T-cell (primary cell): ENCODE measurements at regions of chr3 and their contacts with region 1.

Region 1: DNA sequence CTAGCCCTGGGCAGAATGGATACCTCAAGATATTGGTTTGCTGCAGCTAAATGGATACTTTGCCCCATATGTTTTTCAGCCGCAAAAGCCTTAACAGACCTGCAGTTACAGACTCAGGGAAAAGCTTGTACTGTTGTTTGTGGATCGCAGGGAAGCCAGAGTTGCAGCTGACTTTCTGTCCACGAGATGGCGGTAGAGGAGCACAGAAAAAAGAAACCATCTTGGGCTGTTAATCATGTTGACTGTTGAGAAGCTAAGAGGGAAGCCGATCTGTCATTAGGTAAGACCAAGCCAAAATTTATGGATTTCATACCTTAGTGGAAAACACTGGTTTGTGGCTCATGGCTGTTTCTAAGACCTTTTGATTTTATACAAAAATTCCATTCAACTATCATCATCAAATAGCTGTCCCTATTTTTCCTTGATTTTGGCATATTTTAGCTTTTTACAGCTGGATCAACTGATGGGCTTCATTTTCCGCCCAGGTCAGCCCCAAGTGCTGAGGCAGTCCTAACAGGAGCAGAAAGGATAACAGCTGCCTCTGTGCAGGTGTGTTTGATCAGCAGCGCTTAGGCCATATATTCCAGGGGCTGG is 205.7 kb upstream of the ZPLD1 start:
- DNase-seq: peak; percentile 35 to 88 (median 67)
- ATAC-seq: peak; percentile 71 to 86 (median 80)
- H3K4me3 ChIP-seq: no peak overlapping the region
- H3K4me3 Mint-ChIP-seq: no peak overlapping the region
- H3K27ac ChIP-seq: no peak overlapping the region
- H3K27ac Mint-ChIP-seq: no peak overlapping the region
- H3K4me1 ChIP-seq: peaks cover 0 to 8% of the 10 kb centered on the region in 2 experiments
- H3K4me1 Mint-ChIP-seq: peaks cover 20 to 23% (median 21%) of the 10 kb centered on the region in 3 donors
- H3K27me3 ChIP-seq: no peaks in the 10 kb centered on the region
- H3K27me3 Mint-ChIP-seq: no peaks in the 10 kb centered on the region

Region 2: GRCh38 chr3:101091489-101091888 is 1137.7 kb before region 1 on chr3:
- CTCF ChIA-PET with region 1: no interaction called
- POLR2A ChIA-PET with region 1: no interaction called
- DNase-seq: no peak
- ATAC-seq: no peak
- H3K4me3 ChIP-seq: no peak overlapping the region
- H3K4me3 Mint-ChIP-seq: no peak overlapping the region
- H3K27ac ChIP-seq: no peak overlapping the region
- H3K27ac Mint-ChIP-seq: no peak overlapping the region
- H3K4me1 ChIP-seq: no peaks in the 10 kb centered on the region
- H3K4me1 Mint-ChIP-seq: no peaks in the 10 kb centered on the region
- H3K27me3 ChIP-seq: no peaks in the 10 kb centered on the region
- H3K27me3 Mint-ChIP-seq: peaks cover 2 to 17% of the 10 kb centered on the region in 2 donors

Region 3: GRCh38 chr3:101803173-101803782 is 425.9 kb before region 1 on chr3:
- CTCF ChIA-PET with region 1: interaction called, 26 to 112 read pairs
- POLR2A ChIA-PET with region 1: interaction called in 1 of 2 experiments, 3 read pairs
- DNase-seq: peak in 30 of 35 experiments; percentile 2 to 88 (median 44)
- ATAC-seq: peak; percentile 96 to 99 (median 98)
- H3K4me3 ChIP-seq: no peak overlapping the region
- H3K4me3 Mint-ChIP-seq: no peak overlapping the region
- H3K27ac ChIP-seq: peak overlapping the region; percentile 25
- H3K27ac Mint-ChIP-seq: peak overlapping the region; percentile 73 to 81
- H3K4me1 ChIP-seq: peaks cover 0 to 3% of the 10 kb centered on the region in 2 experiments
- H3K4me1 Mint-ChIP-seq: peaks cover 34 to 50% (median 39%) of the 10 kb centered on the region in 3 donors
- H3K27me3 ChIP-seq: no peaks in the 10 kb centered on the region
- H3K27me3 Mint-ChIP-seq: no peaks in the 10 kb centered on the region

Region 4: DNA sequence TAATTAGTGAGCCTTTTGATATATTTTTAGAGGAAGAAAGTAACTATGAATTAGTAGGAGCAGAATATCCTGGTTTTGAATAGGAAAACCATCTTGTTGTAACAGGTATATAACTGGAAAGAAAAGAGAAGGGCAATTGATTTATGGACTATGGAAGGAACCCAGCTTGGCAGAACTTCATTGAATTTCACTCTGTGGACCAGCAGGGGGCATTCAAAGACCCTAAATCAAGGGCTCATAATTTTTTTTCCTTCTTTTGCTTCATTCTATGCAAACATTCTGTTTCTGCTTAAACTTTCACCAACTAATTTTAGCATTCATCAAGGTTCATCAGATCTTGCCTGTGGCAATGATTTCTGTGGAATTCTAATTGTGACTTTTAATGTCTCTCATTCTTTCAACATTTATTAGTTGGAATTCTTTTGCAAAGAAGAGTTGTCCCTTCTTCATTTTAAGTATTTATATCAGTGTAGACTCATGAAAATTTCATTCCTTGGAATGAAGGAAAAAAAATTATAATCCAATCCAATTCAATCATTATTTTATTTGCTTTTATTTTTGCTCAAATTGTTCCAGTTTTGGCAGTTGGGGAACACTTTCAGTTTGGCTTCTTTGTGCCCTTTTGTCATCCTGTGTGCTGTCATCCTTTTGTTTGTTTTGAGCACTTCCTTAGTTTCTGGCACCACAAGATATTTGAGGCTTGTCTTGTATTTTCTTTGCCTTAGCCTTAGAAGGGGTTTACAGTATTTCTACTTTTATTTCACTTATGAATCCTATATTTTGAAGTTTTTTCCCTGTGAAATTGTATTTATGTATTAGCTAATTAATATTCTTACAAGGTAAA is 419.8 kb before region 1 on chr3:
- CTCF ChIA-PET with region 1: interaction called, 25 to 112 read pairs
- POLR2A ChIA-PET with region 1: interaction called, 3 read pairs
- DNase-seq: peak in 26 of 35 experiments; percentile 15 to 76 (median 32)
- ATAC-seq: peak; percentile 74 to 80 (median 76)
- H3K4me3 ChIP-seq: no peak overlapping the region
- H3K4me3 Mint-ChIP-seq: peak overlapping the region in 2 of 3 donors; percentile 7 to 22
- H3K27ac ChIP-seq: peak overlapping the region; percentile 50
- H3K27ac Mint-ChIP-seq: peak overlapping the region; percentile 74 to 84
- H3K4me1 ChIP-seq: peaks cover 4 to 19% of the 10 kb centered on the region in 2 experiments
- H3K4me1 Mint-ChIP-seq: peaks cover 42 to 48% (median 44%) of the 10 kb centered on the region in 3 donors
- H3K27me3 ChIP-seq: no peaks in the 10 kb centered on the region
- H3K27me3 Mint-ChIP-seq: no peaks in the 10 kb centered on the region

Region 5: GRCh38 chr3:101816215-101817149 is 412.7 kb before region 1 on chr3:
- CTCF ChIA-PET with region 1: interaction called, 25 to 112 read pairs
- POLR2A ChIA-PET with region 1: interaction called in 1 of 2 experiments, 3 read pairs
- DNase-seq: no peak
- ATAC-seq: no peak
- H3K4me3 ChIP-seq: no peak overlapping the region
- H3K4me3 Mint-ChIP-seq: no peak overlapping the region
- H3K27ac ChIP-seq: no peak overlapping the region
- H3K27ac Mint-ChIP-seq: peak overlapping the region; percentile 10 to 22
- H3K4me1 ChIP-seq: peaks cover 3 to 13% of the 10 kb centered on the region in 2 experiments
- H3K4me1 Mint-ChIP-seq: peaks cover 31 to 41% (median 37%) of the 10 kb centered on the region in 3 donors
- H3K27me3 ChIP-seq: no peaks in the 10 kb centered on the region
- H3K27me3 Mint-ChIP-seq: no peaks in the 10 kb centered on the region

Region 6: GRCh38 chr3:101849051-101849720 is 380.0 kb before region 1 on chr3 and contains the start of gene NFKBIZ:
- CTCF ChIA-PET with region 1: interaction called, 4 to 18 read pairs
- POLR2A ChIA-PET with region 1: interaction called in 1 of 2 experiments, 5 read pairs
- DNase-seq: peak; percentile 84 to 97 (median 94)
- ATAC-seq: peak; percentile 79 to 83 (median 80)
- H3K4me3 ChIP-seq: peak within 1 kb of the TSS; percentile 84 to 89
- H3K4me3 Mint-ChIP-seq: peak within 1 kb of the TSS; percentile 98 to 100 (median 99)
- H3K27ac ChIP-seq: peak within 1 kb of the TSS; percentile 99
- H3K27ac Mint-ChIP-seq: peak within 1 kb of the TSS; percentile 99 to 100
- H3K4me1 ChIP-seq: peaks cover 12 to 21% of the 10 kb centered on the region in 2 experiments
- H3K4me1 Mint-ChIP-seq: peaks cover 44 to 45% (median 44%) of the 10 kb centered on the region in 3 donors
- H3K27me3 ChIP-seq: no peaks in the 10 kb centered on the region
- H3K27me3 Mint-ChIP-seq: no peaks in the 10 kb centered on the region
- total RNA-seq, gene NFKBIZ: 130 to 720 (median 132) TPM

Region 7: DNA sequence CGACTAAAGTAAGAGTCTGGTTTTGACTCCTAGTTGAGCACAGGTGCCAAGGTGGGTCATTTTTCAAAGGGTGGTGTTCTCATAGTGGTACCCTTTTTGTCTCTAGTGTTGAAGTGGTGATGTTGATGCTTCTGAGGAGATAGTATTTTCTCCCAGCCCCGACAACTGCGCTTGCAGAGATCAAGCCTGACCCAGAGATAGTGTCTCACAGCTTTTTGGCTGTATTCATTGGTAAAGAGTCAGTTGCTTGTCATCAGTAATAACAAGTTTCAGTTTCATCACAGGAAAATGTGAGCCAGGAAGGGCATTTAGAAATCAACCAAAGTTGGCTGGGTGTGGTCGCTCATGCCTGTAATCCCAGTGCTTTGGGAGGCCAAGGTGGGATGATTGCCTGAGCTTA is 240.6 kb before region 1 on chr3:
- CTCF ChIA-PET with region 1: no interaction called
- POLR2A ChIA-PET with region 1: no interaction called
- DNase-seq: no peak
- ATAC-seq: no peak
- H3K4me3 ChIP-seq: no peak overlapping the region
- H3K4me3 Mint-ChIP-seq: no peak overlapping the region
- H3K27ac ChIP-seq: no peak overlapping the region
- H3K27ac Mint-ChIP-seq: no peak overlapping the region
- H3K4me1 ChIP-seq: peaks cover 0 to 9% of the 10 kb centered on the region in 2 experiments
- H3K4me1 Mint-ChIP-seq: peaks cover 7 to 20% (median 16%) of the 10 kb centered on the region in 3 donors
- H3K27me3 ChIP-seq: no peaks in the 10 kb centered on the region
- H3K27me3 Mint-ChIP-seq: no peaks in the 10 kb centered on the region

Region 8: GRCh38 chr3:102165367-102165766 is 63.8 kb before region 1 on chr3:
- CTCF ChIA-PET with region 1: no interaction called
- POLR2A ChIA-PET with region 1: no interaction called
- DNase-seq: no peak
- ATAC-seq: no peak
- H3K4me3 ChIP-seq: no peak overlapping the region
- H3K4me3 Mint-ChIP-seq: no peak overlapping the region
- H3K27ac ChIP-seq: no peak overlapping the region
- H3K27ac Mint-ChIP-seq: no peak overlapping the region
- H3K4me1 ChIP-seq: no peaks in the 10 kb centered on the region
- H3K4me1 Mint-ChIP-seq: peaks cover 6 to 11% (median 10%) of the 10 kb centered on the region in 3 donors
- H3K27me3 ChIP-seq: no peaks in the 10 kb centered on the region
- H3K27me3 Mint-ChIP-seq: no peaks in the 10 kb centered on the region

Region 9: GRCh38 chr3:102536456-102536855 is 307.3 kb after region 1 on chr3:
- CTCF ChIA-PET with region 1: interaction called, 29 to 80 read pairs
- POLR2A ChIA-PET with region 1: interaction called in 1 of 2 experiments, 3 read pairs
- DNase-seq: peak in 1 of 35 experiments; percentile 41
- ATAC-seq: peak in 1 of 4 experiments; percentile 54
- H3K4me3 ChIP-seq: no peak overlapping the region
- H3K4me3 Mint-ChIP-seq: no peak overlapping the region
- H3K27ac ChIP-seq: no peak overlapping the region
- H3K27ac Mint-ChIP-seq: no peak overlapping the region
- H3K4me1 ChIP-seq: no peaks in the 10 kb centered on the region
- H3K4me1 Mint-ChIP-seq: peaks cover 0 to 9% (median 0%) of the 10 kb centered on the region in 3 donors
- H3K27me3 ChIP-seq: no peaks in the 10 kb centered on the region
- H3K27me3 Mint-ChIP-seq: peaks cover 9 to 12% of the 10 kb centered on the region in 2 donors

Region 10: DNA sequence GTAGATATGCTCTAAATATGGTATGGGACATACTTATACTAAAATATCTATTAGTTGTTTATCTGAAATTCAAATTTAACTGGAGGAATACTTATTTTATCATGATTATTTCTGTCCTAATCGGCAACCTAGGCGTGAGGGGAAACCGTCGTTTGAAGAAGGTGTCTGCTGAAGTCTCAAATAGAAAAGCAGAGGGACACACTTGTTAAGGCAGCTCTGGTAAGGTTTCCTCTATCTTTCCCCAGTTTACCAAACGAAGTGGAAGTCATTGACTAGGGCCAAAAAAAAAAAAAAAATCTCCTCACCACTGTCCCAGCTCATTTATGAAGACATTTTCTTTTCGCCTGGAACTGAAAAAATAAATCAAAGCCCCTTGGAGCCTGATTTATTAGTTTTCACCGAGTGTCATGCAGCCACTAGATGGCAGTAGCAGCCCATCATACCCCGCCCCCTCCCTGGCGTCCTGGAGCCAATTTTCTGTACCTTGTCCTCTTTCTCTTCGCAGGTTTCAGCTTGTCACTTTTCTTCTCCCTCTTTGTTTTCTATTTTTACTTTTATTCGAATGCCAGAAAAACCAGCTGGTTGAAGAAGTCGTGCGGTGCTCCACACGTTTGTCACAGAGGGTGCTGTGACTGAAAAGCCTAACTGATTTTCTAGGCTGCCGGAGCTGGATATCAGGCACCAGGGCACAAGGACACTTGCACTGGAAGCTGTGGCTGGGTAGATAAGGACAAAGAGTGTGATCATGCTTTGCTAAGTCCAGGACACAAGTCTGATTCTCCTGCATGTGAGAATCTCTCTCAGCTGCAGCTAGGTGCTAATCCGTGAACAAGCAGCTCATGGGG is 444.3 kb after region 1 on chr3:
- CTCF ChIA-PET with region 1: interaction called, 4 to 13 read pairs
- POLR2A ChIA-PET with region 1: no interaction called
- DNase-seq: peak in 33 of 35 experiments; percentile 0 to 63 (median 32)
- ATAC-seq: peak in 1 of 4 experiments; percentile 53
- H3K4me3 ChIP-seq: no peak overlapping the region
- H3K4me3 Mint-ChIP-seq: no peak overlapping the region
- H3K27ac ChIP-seq: no peak overlapping the region
- H3K27ac Mint-ChIP-seq: no peak overlapping the region
- H3K4me1 ChIP-seq: no peaks in the 10 kb centered on the region
- H3K4me1 Mint-ChIP-seq: peaks cover 0 to 3% (median 2%) of the 10 kb centered on the region in 3 donors
- H3K27me3 ChIP-seq: peaks cover 0 to 4% of the 10 kb centered on the region in 2 experiments
- H3K27me3 Mint-ChIP-seq: peaks cover 3 to 22% of the 10 kb centered on the region in 2 donors

Region 11: GRCh38 chr3:102745882-102746281 is 516.7 kb after region 1 on chr3:
- CTCF ChIA-PET with region 1: no interaction called
- POLR2A ChIA-PET with region 1: no interaction called
- DNase-seq: no peak
- ATAC-seq: no peak
- H3K4me3 ChIP-seq: no peak overlapping the region
- H3K4me3 Mint-ChIP-seq: no peak overlapping the region
- H3K27ac ChIP-seq: no peak overlapping the region
- H3K27ac Mint-ChIP-seq: no peak overlapping the region
- H3K4me1 ChIP-seq: no peaks in the 10 kb centered on the region
- H3K4me1 Mint-ChIP-seq: no peaks in the 10 kb centered on the region
- H3K27me3 ChIP-seq: no peaks in the 10 kb centered on the region
- H3K27me3 Mint-ChIP-seq: peaks cover 0 to 7% of the 10 kb centered on the region in 2 donors